ENCODE measurements at regions of chr18 and their contacts with region 1.

Region 1: DNA sequence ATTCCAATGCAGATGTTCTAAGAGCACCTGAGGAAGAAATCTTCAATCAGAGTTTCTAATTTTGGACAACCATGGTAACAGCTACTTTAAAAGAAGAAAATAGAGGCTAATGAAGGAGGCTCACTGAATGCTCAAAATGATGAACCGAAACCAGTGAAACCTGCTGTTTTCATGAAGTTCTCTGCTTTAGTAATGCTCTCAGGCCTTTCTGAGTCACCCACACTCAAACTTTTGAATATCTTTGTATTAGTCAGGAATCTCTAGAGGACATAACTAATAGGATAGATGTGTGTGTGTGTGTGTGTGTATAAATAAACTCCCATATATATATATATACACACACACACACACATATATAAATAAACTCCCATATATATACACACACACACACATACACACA is 76.9 kb upstream of the RIT2 start:
- DNase-seq: no peak
- ATAC-seq: no peak
- H3K4me3 ChIP-seq: no peak overlapping the region
- H3K27ac ChIP-seq: no peak overlapping the region
- H3K4me1 ChIP-seq: no peaks in the 10 kb centered on the region
- H3K27me3 ChIP-seq: no peaks in the 10 kb centered on the region
- CTCF ChIP-seq: no peak
- POLR2A ChIP-seq: no peak
- RAD21 ChIP-seq: no peak

Region 2: DNA sequence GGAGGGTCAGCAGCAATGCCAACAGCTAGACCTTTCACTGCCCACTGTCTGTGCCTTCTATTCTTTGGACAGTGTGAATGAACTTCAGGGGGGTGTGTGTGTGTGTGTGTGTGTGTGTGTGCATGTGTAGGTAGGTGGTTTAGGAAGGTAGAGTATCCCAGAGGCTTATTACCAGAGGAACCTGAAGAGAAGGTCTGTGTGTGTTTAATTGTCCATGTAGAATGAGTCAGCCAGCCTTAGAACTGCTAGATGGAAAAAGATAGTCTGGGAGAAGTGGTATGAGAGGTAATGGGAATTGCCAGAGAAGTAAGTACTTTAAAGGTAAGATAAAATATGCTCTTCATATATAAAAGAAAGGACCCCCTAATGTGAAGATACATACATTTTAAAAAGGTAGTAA is 715.1 kb before region 1 on chr18:
- CTCF ChIA-PET with region 1: no interaction called
- POLR2A ChIA-PET with region 1: no interaction called
- dilution Hi-C with region 1: no loop called
- in situ Hi-C with region 1: no loop called
- intact Hi-C with region 1: no loop called
- DNase-seq: no peak
- ATAC-seq: no peak
- H3K4me3 ChIP-seq: no peak overlapping the region
- H3K27ac ChIP-seq: no peak overlapping the region
- H3K4me1 ChIP-seq: no peaks in the 10 kb centered on the region
- H3K27me3 ChIP-seq: no peaks in the 10 kb centered on the region
- CTCF ChIP-seq: no peak
- POLR2A ChIP-seq: no peak
- RAD21 ChIP-seq: no peak

Region 3: DNA sequence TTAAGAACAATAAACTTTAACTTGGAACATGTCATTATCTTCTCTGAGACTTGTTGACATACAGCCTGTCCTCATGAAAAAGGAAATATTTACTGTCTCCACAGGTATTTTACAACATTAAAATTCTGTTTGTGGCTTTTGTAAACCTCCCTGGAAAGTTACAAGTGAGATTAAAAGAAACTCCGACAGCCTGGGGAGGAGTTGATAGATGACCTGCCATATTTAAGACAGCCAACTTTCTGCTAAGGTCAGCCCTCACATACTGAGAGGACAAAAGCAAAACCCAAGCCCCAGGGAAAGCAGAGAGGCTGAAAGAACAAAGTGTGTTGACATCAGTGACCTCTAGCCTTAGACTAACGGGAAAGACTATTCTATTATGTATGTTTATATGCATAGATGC is 427.1 kb before region 1 on chr18:
- CTCF ChIA-PET with region 1: no interaction called
- POLR2A ChIA-PET with region 1: no interaction called
- dilution Hi-C with region 1: no loop called
- in situ Hi-C with region 1: no loop called
- intact Hi-C with region 1: no loop called
- DNase-seq: no peak
- ATAC-seq: no peak
- H3K4me3 ChIP-seq: no peak overlapping the region
- H3K27ac ChIP-seq: no peak overlapping the region
- H3K4me1 ChIP-seq: no peaks in the 10 kb centered on the region
- H3K27me3 ChIP-seq: no peaks in the 10 kb centered on the region
- CTCF ChIP-seq: no peak
- POLR2A ChIP-seq: no peak
- RAD21 ChIP-seq: no peak

Region 4: DNA sequence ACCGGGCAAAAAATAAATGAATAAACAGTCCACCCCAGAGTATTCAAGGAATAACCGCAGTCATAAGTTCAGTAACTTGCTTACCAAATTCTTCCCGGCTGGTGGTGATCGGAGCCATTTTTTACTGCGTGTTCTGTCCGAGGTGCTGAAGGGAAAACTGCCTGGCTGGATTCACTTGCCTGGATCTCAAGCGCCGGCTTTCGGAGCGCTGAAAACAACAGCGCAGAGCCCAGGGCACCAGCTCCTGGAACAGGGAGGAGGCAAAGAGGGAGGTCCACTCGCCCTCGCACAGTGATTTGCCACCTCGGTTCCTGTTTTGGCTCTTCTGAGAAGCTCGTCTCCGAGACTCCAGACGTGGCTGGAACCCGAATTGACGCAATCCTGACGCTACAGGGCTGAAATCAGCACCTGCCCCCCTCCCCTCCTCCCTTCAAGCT is 84.8 kb after region 1 on chr18 and contains the start of gene SYT4:
- CTCF ChIA-PET with region 1: no interaction called
- POLR2A ChIA-PET with region 1: no interaction called
- dilution Hi-C with region 1: no loop called
- in situ Hi-C with region 1: loop called (anchors 25 kb)
- intact Hi-C with region 1: no loop called
- DNase-seq: peak; percentile 7
- ATAC-seq: peak; percentile 54; the same call in 1 of the 2 replicates
- H3K4me3 ChIP-seq: no peak within 1 kb of the TSS
- H3K27ac ChIP-seq: no peak within 1 kb of the TSS
- H3K4me1 ChIP-seq: no peaks in the 10 kb centered on the region
- H3K27me3 ChIP-seq: no peaks in the 10 kb centered on the region
- CTCF ChIP-seq: no peak
- POLR2A ChIP-seq: no peak
- RAD21 ChIP-seq: no peak
- total RNA-seq, gene SYT4: not detected in 2 replicates

Measured in IMR-90 (cell line).